CD4-positive, alpha-beta memory T cell (primary cell): ENCODE measurements at regions of chr12 and their contacts with region 1.

Region 1: GRCh38 chr12:57744777-57745484 is at the start of gene TSPAN31:
- DNase-seq: peak; percentile 91 to 98 (median 95)
- H3K4me3 ChIP-seq: peak within 1 kb of the TSS; percentile 72 to 83
- H3K4me3 Mint-ChIP-seq: peak within 1 kb of the TSS; percentile 86 to 97 (median 92)
- H3K27ac ChIP-seq: peak within 1 kb of the TSS; percentile 93
- H3K27ac Mint-ChIP-seq: peak within 1 kb of the TSS; percentile 88 to 99 (median 97)
- H3K4me1 ChIP-seq: peaks cover 49% of the 10 kb centered on the region
- H3K4me1 Mint-ChIP-seq: peaks cover 30 to 58% (median 43%) of the 10 kb centered on the region in 4 donors
- H3K27me3 ChIP-seq: no peaks in the 10 kb centered on the region
- H3K27me3 Mint-ChIP-seq: no peaks in the 10 kb centered on the region
- total RNA-seq, gene TSPAN31: 27.5 to 30.6 TPM

Region 2: DNA sequence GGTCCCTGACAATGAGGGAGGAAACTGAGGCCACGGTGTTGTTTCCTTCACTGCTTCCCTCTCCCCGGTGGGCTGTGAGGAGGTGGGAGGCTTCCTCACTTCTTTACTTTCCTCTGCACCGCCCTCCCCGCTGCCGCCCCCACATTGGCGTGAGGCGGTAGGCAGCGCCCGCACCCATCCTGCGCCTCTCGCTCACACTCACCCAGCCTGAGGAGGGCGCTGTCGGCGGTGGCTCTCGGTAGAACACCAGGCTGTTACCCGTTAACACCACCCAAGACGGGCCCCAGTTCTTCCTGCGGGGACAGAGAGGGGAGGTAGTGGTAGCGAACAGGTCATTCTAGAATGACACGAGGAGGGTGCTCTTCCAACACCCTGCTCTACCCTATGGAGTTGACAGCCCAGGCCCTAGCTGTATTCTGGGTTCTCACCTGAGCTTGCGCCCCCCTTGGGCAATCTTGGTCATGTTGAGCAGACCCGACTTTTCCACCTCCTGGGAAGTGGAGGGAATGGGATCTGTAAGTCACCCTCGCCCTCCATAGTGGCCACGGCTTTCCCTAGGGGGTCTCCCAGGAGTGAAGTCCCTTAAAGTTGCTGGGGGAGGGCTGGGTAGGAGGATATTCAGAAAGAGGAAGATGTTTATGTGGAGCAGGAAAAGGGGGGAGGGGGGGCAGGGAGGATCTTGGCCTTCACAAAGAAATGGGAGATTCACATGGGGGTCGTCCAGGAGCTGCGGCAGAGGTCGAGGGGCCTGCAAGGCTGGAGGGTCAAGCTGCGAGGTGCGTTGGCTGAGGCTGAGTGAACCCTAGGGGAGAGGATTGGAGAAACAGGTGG is 268.6 kb before region 1 on chr12:
- CTCF ChIA-PET with region 1: no interaction called
- POLR2A ChIA-PET with region 1: interaction called, 6 read pairs
- intact Hi-C with region 1: loop called (anchors 5 kb)
- DNase-seq: peak; percentile 65 to 80 (median 71)
- H3K4me3 ChIP-seq: peak overlapping the region; percentile 91 to 97
- H3K4me3 Mint-ChIP-seq: peak overlapping the region; percentile 89 to 99 (median 98)
- H3K27ac ChIP-seq: peak overlapping the region; percentile 86
- H3K27ac Mint-ChIP-seq: peak overlapping the region; percentile 98 to 100 (median 99)
- H3K4me1 ChIP-seq: peaks cover 81% of the 10 kb centered on the region
- H3K4me1 Mint-ChIP-seq: peaks cover 51 to 89% (median 69%) of the 10 kb centered on the region in 4 donors
- H3K27me3 ChIP-seq: no peaks in the 10 kb centered on the region
- H3K27me3 Mint-ChIP-seq: no peaks in the 10 kb centered on the region

Region 3: GRCh38 chr12:57568838-57569237 is 176.1 kb before region 1 on chr12:
- CTCF ChIA-PET with region 1: no interaction called
- POLR2A ChIA-PET with region 1: no interaction called
- intact Hi-C with region 1: no loop called
- DNase-seq: no peak
- H3K4me3 ChIP-seq: no peak overlapping the region
- H3K4me3 Mint-ChIP-seq: no peak overlapping the region
- H3K27ac ChIP-seq: no peak overlapping the region
- H3K27ac Mint-ChIP-seq: no peak overlapping the region
- H3K4me1 ChIP-seq: no peaks in the 10 kb centered on the region
- H3K4me1 Mint-ChIP-seq: no peaks in the 10 kb centered on the region
- H3K27me3 ChIP-seq: no peaks in the 10 kb centered on the region
- H3K27me3 Mint-ChIP-seq: peaks cover 1 to 13% of the 10 kb centered on the region in 2 donors

Region 4: GRCh38 chr12:57583008-57583831 is 161.7 kb before region 1 on chr12:
- CTCF ChIA-PET with region 1: interaction called, 23 read pairs
- POLR2A ChIA-PET with region 1: interaction called, 3 read pairs
- intact Hi-C with region 1: loop called (anchors 1 kb)
- DNase-seq: peak; percentile 70 to 77 (median 74)
- H3K4me3 ChIP-seq: no peak overlapping the region
- H3K4me3 Mint-ChIP-seq: no peak overlapping the region
- H3K27ac ChIP-seq: no peak overlapping the region
- H3K27ac Mint-ChIP-seq: peak overlapping the region in 2 of 7 donors; percentile 26 to 38
- H3K4me1 ChIP-seq: no peaks in the 10 kb centered on the region
- H3K4me1 Mint-ChIP-seq: peaks cover 3 to 7% (median 5%) of the 10 kb centered on the region in 4 donors
- H3K27me3 ChIP-seq: no peaks in the 10 kb centered on the region
- H3K27me3 Mint-ChIP-seq: peaks cover 6 to 9% of the 10 kb centered on the region in 2 donors

Region 5: GRCh38 chr12:57693659-57694458 is 51.1 kb before region 1 on chr12 and contains the start of gene OS9:
- CTCF ChIA-PET with region 1: interaction called, 15 read pairs
- POLR2A ChIA-PET with region 1: interaction called, 22 read pairs
- intact Hi-C with region 1: loop called (anchors 1 kb)
- DNase-seq: peak; percentile 93 to 100 (median 99)
- H3K4me3 ChIP-seq: peak within 1 kb of the TSS; percentile 75 to 82
- H3K4me3 Mint-ChIP-seq: no peak within 1 kb of the TSS
- H3K27ac ChIP-seq: peak within 1 kb of the TSS; percentile 79
- H3K27ac Mint-ChIP-seq: no peak within 1 kb of the TSS
- H3K4me1 ChIP-seq: peaks cover 26% of the 10 kb centered on the region
- H3K4me1 Mint-ChIP-seq: peaks cover 0 to 18% (median 5%) of the 10 kb centered on the region in 4 donors
- H3K27me3 ChIP-seq: no peaks in the 10 kb centered on the region
- H3K27me3 Mint-ChIP-seq: peaks cover 4 to 6% of the 10 kb centered on the region in 2 donors
- total RNA-seq, gene OS9: 189 to 195 TPM

Region 6: DNA sequence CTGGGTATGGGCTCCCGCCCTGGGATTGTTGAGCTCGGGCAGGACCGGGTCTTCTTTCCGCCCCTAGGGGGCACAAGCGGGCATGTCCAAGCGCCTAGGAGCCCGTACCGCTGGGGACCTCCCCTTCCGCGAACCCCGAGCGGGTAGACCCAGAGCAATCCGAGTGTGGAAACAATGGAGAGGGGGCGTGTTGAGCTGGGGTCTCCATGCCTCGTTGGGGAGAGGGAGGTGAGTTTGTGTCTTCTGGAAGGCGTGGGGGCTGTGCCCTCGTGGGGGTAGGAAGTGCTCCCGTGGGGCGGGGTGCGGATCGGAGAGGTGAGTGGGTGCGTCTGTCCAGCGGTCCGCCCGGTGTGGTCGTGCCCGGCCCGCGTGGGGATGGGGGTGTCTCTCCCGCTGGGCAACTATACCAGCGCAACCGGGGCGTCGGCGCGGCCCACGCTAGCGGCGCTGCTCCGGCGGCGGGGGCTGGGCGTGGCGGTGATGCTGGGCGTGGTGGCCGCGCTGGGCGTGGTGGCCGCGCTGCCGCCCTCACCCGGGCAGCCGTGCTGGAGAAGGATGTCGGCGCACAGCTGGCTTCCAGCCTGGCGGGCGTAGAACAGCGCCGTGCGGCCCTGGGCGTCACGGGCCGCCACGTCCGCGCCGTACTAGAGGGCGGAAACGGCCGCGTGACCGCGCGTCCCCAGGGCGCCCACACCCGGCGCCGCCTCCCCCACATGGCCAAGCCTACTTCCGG is 18.6 kb before region 1 on chr12:
- CTCF ChIA-PET with region 1: interaction called, 10 read pairs
- POLR2A ChIA-PET with region 1: interaction called, 32 read pairs
- intact Hi-C with region 1: loop called (anchors 1 kb)
- DNase-seq: peak in 2 of 5 donors; percentile 16 to 41
- H3K4me3 ChIP-seq: no peak overlapping the region
- H3K4me3 Mint-ChIP-seq: peak overlapping the region in 3 of 8 donors; percentile 49 to 70 (median 52)
- H3K27ac ChIP-seq: no peak overlapping the region
- H3K27ac Mint-ChIP-seq: peak overlapping the region in 3 of 7 donors; percentile 32 to 79 (median 59)
- H3K4me1 ChIP-seq: no peaks in the 10 kb centered on the region
- H3K4me1 Mint-ChIP-seq: peaks cover 17 to 33% (median 22%) of the 10 kb centered on the region in 4 donors
- H3K27me3 ChIP-seq: no peaks in the 10 kb centered on the region
- H3K27me3 Mint-ChIP-seq: no peaks in the 10 kb centered on the region

Region 7: DNA sequence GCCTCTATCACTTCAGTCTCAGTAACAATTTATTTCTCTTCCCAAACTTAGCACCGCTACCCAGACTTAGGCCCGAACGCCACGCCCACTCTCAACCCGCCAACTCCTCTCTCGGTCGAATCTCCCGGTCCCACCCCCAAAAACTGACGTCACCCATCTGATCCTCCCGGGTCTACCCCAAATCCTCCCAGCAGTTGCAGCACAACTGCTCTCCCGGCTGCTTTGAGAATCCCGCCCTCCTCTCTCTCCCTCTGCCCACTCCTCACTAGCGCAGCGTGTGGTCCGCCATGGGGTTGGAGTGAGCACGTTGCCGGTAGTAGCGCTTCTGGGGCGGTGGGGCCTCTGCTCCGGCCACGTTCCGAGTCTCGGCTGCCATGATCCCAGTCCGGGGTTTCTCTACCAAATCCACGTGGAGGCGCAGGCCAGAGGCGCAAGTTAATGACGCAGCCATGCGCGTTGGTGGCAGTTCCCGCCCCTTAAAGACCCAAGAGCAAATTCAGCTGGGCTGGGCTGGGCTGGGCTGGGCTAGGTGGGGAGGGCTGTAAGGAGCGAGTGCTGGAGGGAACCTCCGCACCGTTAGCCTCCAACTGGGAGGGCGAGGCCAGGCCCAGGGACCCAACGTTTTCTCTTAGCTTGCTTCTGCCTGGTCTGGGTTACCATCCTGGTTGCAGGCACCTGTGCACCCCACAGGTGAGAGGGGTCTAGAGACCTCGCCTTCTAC is 26.9 kb after region 1 on chr12 and contains the start of gene METTL1:
- CTCF ChIA-PET with region 1: interaction called, 3 read pairs
- POLR2A ChIA-PET with region 1: interaction called, 13 read pairs
- intact Hi-C with region 1: no loop called
- DNase-seq: peak; percentile 88 to 95 (median 91)
- H3K4me3 ChIP-seq: peak within 1 kb of the TSS; percentile 98 to 99
- H3K4me3 Mint-ChIP-seq: peak within 1 kb of the TSS; percentile 95 to 100 (median 96)
- H3K27ac ChIP-seq: peak within 1 kb of the TSS; percentile 84
- H3K27ac Mint-ChIP-seq: peak within 1 kb of the TSS; percentile 94 to 99 (median 98)
- H3K4me1 ChIP-seq: peaks cover 30% of the 10 kb centered on the region
- H3K4me1 Mint-ChIP-seq: peaks cover 14 to 33% (median 21%) of the 10 kb centered on the region in 4 donors
- H3K27me3 ChIP-seq: peaks cover 4% of the 10 kb centered on the region
- H3K27me3 Mint-ChIP-seq: peaks cover 0 to 2% of the 10 kb centered on the region in 2 donors
- total RNA-seq, gene METTL1: 9.9 to 10.9 TPM